ENCODE measurements at regions of chr16 and their contacts with region 1.

Region 1: DNA sequence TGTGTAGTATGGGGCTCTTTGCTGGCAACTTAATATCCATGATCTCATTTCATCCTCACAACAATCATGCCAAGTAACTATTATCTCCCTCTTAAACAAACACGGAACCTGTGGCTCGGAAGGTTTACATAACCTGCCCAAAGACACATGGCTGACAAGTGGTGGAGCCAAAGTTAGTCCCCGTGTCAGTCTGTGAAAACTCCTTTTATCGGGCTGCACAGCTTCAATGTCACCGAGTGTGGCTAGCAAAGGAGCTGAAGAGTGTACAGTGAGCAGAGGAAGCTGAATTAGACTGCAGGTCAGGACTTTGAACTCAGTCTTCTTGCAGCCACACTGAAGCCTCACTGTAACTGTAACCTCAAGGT is 80.3 kb downstream of the PARN start:
- DNase-seq: no peak
- H3K4me3 ChIP-seq: no peak overlapping the region
- H3K27ac ChIP-seq: no peak overlapping the region
- H3K4me1 ChIP-seq: peaks cover 3% of the 10 kb centered on the region
- H3K27me3 ChIP-seq: no peaks in the 10 kb centered on the region
- CTCF ChIP-seq: no peak
- EP300 ChIP-seq: no peak
- POLR2A ChIP-seq: no peak

Region 2: DNA sequence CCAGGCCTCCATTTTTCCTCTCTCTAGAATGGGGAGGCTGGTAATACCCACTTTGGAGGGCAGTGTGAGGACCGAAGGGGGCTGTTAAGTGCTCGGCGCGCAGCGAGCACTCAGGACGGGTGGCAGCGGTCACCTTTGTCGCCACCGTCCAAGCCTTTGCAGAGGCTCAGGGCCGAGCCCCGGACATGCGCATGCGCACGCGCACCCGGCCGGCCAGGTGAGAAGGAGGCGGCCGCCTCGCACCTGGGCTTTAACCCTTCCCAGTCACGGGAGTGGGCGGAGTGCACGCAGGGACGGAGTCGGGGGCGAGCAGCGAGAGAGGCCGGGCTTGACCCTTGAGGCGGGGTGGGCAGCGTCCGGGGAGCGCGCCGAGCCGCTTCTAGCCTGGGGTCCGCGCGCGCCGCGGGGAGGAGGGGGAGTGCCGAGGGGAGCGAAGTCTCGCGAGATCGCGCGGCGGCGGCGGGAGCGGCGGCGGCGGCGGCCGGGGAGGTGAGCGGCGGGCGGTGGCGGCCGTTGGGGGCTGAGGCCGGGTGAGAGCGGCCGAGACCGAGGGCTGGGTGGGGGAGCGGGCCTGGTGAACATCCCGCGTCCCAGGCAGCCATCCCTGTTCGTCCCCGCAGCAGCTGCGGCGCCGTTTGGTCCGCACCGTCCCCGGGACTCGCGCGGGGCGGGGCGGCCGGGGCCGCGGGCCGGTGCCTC is 478.7 kb before region 1 on chr16 and contains the start of gene MRTFB:
- intact Hi-C with region 1: no loop called
- DNase-seq: peak; percentile 77 to 90 (median 88)
- H3K4me3 ChIP-seq: peak within 1 kb of the TSS; percentile 73
- H3K27ac ChIP-seq: peak within 1 kb of the TSS in 1 of 2 donors; percentile 70
- H3K4me1 ChIP-seq: peaks cover 6% of the 10 kb centered on the region
- H3K27me3 ChIP-seq: no peaks in the 10 kb centered on the region
- CTCF ChIP-seq: no peak
- EP300 ChIP-seq: no peak
- POLR2A ChIP-seq: peak; percentile 26
- total RNA-seq, gene MRTFB: 16.3 to 45.6 (median 37.0) TPM

Region 3: DNA sequence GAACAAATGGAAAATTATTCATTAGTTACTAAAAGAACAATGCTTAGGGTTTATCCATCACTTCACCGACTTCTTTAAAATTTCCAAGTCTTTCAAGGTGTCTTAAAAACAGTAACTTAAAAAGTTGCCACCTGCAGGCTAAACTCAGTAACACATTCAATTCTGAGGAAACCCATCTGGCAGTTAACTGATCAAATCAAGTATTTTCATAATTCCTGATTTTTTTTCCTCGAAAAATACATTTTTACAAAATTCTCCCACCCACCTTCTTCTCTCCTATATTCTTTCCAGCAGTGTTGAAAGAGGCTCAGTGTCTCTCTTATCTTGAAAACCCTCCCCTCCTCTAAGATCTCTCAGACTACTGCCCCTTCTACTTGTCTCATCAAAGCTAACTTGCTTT is 50.4 kb after region 1 on chr16:
- intact Hi-C with region 1: loop called in 1 of 4 experiments (anchors 10 kb)
- DNase-seq: no peak
- H3K4me3 ChIP-seq: no peak overlapping the region
- H3K27ac ChIP-seq: no peak overlapping the region
- H3K4me1 ChIP-seq: no peaks in the 10 kb centered on the region
- H3K27me3 ChIP-seq: no peaks in the 10 kb centered on the region
- CTCF ChIP-seq: peak in 1 of 3 donors; percentile 29
- EP300 ChIP-seq: no peak
- POLR2A ChIP-seq: no peak

Measured in ovary (tissue), 10 donors.